ENCODE measurements at regions of chr10 and their contacts with region 1.

Region 1: GRCh38 chr10:6678211-6678803 is 98.2 kb upstream of the PRKCQ start:
- DNase-seq: peak; percentile 27
- CTCF ChIP-seq: peak; percentile 81

Region 2: GRCh38 chr10:6667679-6668270 is 10.5 kb before region 1 on chr10:
- CTCF ChIA-PET with region 1: interaction called, 32 read pairs
- POLR2A ChIA-PET with region 1: no interaction called
- DNase-seq: no peak
- CTCF ChIP-seq: peak; percentile 41

Region 3: DNA sequence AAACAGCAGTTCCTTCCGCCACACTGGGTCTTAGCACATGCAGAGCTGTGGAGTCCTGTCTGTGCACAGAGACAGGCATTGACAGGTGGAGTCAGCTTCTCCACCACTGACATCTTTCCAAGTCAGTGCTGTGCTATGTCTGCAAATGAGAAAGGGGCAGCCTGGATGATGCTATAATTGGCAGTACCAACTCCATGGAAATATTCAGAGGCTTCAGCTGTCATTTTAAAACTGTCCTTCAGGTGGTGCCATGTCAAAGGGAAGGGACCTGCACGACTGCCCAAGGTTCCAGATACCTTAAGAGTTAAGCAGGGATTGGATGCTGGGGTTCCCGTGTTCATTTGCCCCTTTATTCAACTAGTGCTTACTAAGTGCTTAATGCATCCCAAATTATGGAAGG is 159.8 kb after region 1 on chr10:
- CTCF ChIA-PET with region 1: no interaction called
- POLR2A ChIA-PET with region 1: no interaction called
- DNase-seq: no peak
- CTCF ChIP-seq: peak; percentile 42

Measured in GM10248 (cell line).